ENCODE measurements at regions of chr1 and their contacts with region 1.

Region 1: DNA sequence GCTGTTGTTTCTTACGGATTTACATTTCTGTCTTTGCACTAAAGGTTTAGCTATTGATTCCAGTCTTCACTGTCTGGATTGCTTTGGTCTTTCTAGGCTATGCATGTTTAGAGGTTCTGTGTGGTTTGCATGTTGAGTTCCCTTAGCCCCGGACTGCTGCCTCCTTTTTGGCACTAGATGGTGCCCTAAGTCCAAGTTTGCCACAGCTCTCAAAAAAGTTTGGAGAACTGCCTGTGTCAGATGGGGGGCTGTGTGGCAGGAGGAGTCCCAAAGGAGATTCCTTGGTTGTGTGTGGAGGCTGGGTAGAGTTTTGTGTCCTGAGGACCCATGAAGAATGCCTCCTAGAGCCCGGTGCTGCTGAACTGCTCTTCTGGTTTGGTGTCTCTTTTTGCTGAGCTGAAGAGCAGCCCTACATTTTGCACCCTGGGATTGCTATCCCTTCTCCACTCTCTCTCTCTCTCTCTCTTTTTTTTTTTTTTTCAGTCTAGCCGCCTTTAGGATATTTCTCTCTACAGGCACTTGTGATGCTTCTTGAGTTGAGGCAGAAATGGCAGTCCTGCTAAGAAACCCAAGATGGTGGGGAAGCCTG is 74.4 kb downstream of the PTGS2 start:
- DNase-seq: no peak
- H3K4me3 ChIP-seq: no peak overlapping the region
- H3K27ac ChIP-seq: no peak overlapping the region
- H3K4me1 ChIP-seq: no peaks in the 10 kb centered on the region
- H3K27me3 ChIP-seq: no peaks in the 10 kb centered on the region
- CTCF ChIP-seq: peak in 5 of 6 experiments; percentile 23 to 71 (median 55)
- POLR2A ChIP-seq: no peak

Region 2: DNA sequence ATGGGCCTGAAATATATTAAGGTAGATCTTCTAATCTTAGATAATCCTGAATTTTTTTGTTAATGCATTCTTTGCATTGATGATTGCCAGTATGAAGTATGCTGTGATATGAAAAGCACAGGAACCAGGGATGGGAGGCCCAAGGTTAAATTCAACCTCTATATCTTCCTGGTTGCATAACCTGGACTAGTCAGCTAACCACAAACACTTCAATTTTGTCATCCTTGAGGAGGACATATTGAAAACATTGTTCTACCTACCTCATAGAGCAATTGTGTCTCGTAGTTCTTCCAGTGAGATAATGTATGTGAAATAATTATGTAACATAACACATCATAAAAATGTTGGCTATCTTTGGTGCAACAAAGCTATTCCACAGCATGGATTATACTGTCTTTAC is 170.5 kb before region 1 on chr1:
- intact Hi-C with region 1: no loop called
- DNase-seq: no peak
- H3K4me3 ChIP-seq: no peak overlapping the region
- H3K27ac ChIP-seq: no peak overlapping the region
- H3K4me1 ChIP-seq: peaks cover 0 to 6% (median 0%) of the 10 kb centered on the region in 3 donors
- H3K27me3 ChIP-seq: no peaks in the 10 kb centered on the region
- CTCF ChIP-seq: no peak
- POLR2A ChIP-seq: no peak

Region 3: DNA sequence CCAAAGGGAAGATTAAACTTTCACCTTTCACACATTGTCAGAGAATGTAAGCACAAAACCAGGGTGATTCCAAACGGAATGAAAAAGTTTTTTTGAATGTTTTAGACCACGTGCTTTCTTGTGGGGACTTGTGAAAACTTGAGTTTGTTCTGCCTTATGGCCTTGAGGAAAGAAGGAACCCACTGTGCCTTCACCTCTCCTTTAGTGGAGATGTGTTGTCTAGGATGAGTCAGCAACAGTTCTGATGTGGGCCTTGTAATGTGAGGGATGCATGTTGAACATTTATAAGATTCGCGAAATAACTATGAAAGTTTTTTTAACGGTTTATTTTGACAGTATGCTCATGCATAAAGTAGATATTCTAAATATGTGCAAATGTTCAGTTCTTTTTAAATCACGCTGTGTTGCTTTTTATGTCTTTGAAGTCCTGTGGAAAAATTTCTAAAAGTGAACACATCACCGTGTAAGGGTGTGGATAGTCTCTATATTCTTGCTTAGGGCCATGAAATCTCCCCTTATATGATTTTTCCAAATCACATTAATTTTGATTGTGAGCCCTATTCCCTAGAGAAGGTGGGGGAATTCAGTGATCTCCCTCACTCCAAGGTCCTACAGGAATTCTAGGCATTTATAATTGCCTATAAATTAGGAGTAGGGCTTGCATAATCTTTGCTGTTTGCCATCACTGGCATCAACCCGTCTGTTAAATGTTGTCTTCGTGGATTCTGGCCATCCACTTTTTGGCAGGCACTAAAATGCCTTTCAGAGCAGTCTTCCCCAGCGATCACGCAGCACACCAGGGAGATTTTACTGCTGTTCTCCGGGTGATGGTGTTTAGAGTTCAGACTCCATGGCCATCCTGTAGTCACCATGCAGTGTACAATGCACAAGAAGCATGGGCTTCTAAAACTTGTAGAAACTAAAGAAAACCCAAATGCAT is 270.3 kb after region 1 on chr1:
- intact Hi-C with region 1: no loop called
- DNase-seq: no peak
- H3K4me3 ChIP-seq: no peak overlapping the region
- H3K27ac ChIP-seq: no peak overlapping the region
- H3K4me1 ChIP-seq: peaks cover 0 to 9% (median 0%) of the 10 kb centered on the region in 3 donors
- H3K27me3 ChIP-seq: no peaks in the 10 kb centered on the region
- CTCF ChIP-seq: no peak
- POLR2A ChIP-seq: no peak

Region 4: DNA sequence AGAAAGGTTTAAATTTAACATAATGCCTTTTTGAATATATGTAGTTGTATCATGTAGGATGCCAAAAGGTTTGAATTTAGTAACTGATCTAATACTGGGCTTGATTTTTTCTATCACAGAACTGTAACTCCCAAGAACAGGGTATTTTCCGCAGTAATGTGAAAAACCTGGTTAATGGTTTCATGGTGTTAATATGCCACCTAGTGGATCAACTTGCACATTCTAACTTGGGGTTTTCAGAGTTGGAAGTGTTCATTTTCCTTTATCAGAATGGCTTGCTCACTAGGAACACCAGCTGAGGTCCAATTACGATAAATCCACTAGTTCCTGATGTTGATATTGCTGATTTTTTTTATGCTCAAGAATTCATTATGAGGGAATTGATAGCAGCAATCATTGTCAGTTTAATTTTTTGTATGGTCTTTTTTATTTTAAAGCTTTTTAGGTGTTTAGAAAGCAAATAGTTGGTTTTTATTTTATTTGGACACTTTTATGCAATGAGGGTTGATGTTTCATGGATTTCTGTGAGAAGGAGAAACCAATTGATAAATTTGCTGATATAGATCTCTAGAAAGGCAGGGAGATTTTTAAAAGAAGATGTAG is 380.1 kb after region 1 on chr1:
- intact Hi-C with region 1: loop called (anchors 5 kb)
- DNase-seq: no peak
- H3K4me3 ChIP-seq: no peak overlapping the region
- H3K27ac ChIP-seq: no peak overlapping the region
- H3K4me1 ChIP-seq: peaks cover 0 to 9% (median 0%) of the 10 kb centered on the region in 3 donors
- H3K27me3 ChIP-seq: no peaks in the 10 kb centered on the region
- CTCF ChIP-seq: peak; percentile 54 to 82 (median 68)
- POLR2A ChIP-seq: no peak

Measured in esophagus squamous epithelium (tissue), 5 donors.